Right ventricle myocardium inferior (tissue), 1 donor: ENCODE measurements at regions of chr12 and their contacts with region 1.

Region 1: DNA sequence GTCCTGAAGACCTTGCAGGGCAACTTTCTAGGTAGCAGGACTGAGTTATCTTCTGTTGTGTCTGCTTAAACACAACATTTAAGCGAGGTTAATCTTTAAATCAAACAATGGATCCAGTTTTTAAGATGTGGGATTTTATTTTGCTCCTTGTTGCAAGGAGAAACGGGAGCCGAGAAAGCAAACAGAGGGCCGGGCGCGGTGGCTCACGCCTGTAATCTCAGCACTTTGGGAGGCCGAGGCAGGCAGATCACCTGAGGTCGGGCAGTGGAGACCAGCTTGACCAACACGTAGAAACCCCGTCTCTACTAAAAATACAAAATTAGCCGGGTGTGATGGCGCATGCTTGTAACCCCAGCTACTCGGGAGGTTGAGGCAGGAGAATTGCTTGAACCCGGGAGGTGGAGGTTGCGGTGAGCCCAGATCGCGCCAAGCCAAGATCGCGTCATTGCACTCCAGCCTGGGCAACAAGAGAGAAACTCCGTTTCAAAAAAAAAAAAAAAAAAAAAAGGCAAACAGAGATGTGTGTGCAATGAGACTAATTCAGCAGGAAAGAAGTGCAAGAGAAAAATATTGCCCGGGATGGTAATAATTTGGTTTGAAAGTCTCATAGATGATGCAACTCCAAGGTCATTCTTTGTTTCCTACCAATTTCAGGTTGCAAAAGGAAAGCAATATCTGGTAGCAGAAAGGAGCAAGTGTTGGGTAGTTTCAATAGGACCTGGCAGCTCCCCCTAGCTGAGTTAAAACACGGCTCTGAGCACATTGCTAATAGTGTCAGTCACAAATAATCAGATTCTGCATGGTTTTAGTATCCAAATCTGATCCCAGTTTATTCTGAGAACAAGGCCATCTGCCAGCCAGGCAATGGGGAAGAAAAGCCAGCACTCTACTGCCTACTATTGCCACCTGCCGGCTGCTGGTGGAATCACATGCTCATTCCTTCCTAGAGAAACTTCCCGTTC is 141.4 kb downstream of the PPM1H start:
- DNase-seq: peak; percentile 93
- ATAC-seq: peak; percentile 79

Region 2: GRCh38 chr12:62123721-62124203 is 669.8 kb before region 1 on chr12:
- intact Hi-C with region 1: no loop called
- DNase-seq: no peak
- ATAC-seq: no peak

Region 3: DNA sequence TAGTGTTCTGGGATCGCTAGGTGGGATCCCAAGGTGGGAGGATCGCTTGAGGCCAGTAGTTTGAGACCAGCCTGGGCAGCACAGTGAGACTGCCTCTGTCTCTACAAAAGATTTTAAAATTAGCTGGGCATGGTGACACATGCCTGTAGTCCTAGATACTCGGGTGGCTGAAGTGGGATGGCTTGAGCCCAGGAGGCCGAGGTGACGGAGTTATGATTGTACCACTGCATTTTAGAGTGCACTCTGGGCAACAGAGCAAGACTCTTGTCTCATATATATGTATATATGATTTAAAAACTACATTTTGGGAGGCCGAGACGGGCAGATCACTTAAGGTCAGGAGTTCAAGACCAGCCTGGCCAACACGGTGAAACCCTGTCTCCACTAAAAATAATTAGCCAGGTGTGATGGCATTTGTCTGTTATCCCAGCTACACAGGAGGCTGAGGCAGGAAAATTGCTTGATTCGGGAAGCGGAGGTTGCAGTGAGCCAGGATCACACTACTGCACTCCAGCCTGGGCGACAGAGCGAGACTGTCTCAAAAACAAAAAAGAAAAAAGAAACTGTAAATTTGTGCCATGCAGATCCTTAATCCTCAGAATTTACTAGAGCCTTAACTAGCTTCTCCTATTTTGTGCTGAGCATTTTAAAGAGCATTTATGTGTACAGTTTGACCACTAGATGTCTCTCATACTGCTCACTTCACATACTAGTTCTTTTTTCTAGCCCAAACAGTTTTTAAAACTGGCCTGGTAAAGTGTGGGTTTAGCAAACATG is 212.1 kb before region 1 on chr12:
- intact Hi-C with region 1: loop called (anchors 1 kb)
- DNase-seq: no peak
- ATAC-seq: peak; percentile 85

Region 4: DNA sequence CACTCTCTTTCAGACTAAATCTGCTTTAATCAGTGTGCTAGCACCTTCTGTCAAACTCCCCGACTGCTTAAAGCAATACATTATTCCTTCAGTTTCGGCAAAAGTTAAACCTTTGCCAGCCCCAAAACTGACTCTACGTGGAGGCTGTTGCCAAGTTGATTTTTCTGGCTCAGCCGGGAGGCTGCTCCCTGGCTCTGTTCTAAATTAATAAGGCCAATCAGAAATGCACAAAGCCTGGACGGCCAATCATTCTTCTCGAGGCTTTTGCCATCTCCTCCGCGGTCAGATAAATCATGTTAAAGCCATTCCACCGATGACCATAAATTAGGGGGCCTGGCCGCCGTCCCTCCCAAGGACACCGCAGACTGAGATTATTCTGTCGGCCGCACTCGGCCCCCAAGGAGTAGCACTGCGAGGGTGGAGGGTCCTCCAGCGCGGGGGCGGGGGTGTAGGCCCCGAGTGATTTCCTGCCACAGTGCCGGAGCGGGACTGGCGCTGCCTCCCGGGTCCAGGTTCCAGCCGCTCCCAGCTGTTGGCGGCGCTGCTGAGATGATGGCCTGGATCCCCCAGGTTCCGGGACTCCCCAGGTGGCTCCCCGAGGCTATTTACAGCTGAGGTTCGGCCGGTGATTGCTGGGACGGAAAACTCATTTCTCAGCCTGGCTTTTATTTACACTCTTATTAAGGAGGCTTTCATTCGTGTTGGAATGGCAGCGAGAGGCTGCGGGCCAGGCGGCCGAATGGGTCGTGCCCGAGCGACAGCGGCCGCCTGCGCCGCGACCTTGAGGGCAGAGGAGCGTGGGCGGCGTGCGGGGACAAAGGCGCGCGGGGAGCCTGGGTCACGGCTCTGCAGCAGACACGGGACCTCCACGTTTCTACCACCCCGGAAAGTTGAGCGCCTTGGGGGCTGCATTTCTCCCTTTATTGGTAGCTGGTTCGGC is 161.8 kb before region 1 on chr12:
- intact Hi-C with region 1: loop called (anchors 2 kb)
- DNase-seq: peak; percentile 82
- ATAC-seq: peak; percentile 82

Region 5: GRCh38 chr12:62703011-62703380 is 90.5 kb before region 1 on chr12:
- intact Hi-C with region 1: loop called (anchors 5 kb)
- DNase-seq: no peak
- ATAC-seq: peak; percentile 6